Activated CD4-positive, alpha-beta memory T cell treated with anti-CD3 and anti-CD28 coated beads for 36 hours (primary cell): ENCODE measurements at regions of chr13 and their contacts with region 1.

Region 1: GRCh38 chr13:36736119-36736726 is 62.4 kb downstream of the SERTM1 start:
- DNase-seq: peak; percentile 28
- H3K4me3 Mint-ChIP-seq: no peak overlapping the region
- H3K27ac Mint-ChIP-seq: no peak overlapping the region
- H3K4me1 Mint-ChIP-seq: no peaks in the 10 kb centered on the region
- H3K27me3 Mint-ChIP-seq: no peaks in the 10 kb centered on the region

Region 2: GRCh38 chr13:35978603-35979316 is 757.5 kb before region 1 on chr13:
- CTCF ChIA-PET with region 1: interaction called, 7 read pairs
- POLR2A ChIA-PET with region 1: no interaction called
- intact Hi-C with region 1: loop called (anchors 2 kb)
- DNase-seq: no peak
- H3K4me3 Mint-ChIP-seq: no peak overlapping the region
- H3K27ac Mint-ChIP-seq: no peak overlapping the region
- H3K4me1 Mint-ChIP-seq: no peaks in the 10 kb centered on the region
- H3K27me3 Mint-ChIP-seq: peaks cover 2% of the 10 kb centered on the region

Region 3: DNA sequence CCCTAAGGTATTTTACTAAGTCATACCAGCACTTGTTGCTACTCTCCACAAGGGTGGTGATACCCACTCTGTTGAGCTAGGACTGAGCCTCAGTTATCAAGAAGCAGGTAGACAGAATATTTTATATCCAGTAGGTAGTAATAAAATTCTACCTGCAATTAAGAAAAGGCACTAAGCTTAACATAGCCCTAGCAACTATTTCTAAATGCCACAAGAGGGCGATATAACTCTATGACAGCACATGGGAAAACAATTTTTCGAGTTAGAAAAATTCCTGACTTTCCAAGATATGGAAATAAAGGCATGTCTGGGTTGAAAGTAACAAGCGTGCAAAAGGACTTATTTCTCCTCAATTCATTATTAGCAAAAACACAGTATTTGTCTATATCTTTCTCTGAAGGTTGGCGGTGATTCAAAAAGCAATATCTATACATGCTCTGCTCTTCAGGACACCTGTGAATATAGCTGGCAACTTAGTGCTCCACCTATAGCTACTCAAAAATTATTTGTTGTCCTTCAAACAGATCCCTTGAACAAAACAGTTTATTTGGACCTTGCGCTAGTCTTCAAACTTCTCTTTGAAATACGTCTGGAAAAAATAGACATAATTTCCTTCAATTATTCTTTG is 453.3 kb before region 1 on chr13:
- CTCF ChIA-PET with region 1: interaction called, 13 read pairs
- POLR2A ChIA-PET with region 1: no interaction called
- intact Hi-C with region 1: loop called (anchors 5 kb)
- DNase-seq: no peak
- H3K4me3 Mint-ChIP-seq: no peak overlapping the region
- H3K27ac Mint-ChIP-seq: no peak overlapping the region
- H3K4me1 Mint-ChIP-seq: no peaks in the 10 kb centered on the region
- H3K27me3 Mint-ChIP-seq: peaks cover 4% of the 10 kb centered on the region

Region 4: DNA sequence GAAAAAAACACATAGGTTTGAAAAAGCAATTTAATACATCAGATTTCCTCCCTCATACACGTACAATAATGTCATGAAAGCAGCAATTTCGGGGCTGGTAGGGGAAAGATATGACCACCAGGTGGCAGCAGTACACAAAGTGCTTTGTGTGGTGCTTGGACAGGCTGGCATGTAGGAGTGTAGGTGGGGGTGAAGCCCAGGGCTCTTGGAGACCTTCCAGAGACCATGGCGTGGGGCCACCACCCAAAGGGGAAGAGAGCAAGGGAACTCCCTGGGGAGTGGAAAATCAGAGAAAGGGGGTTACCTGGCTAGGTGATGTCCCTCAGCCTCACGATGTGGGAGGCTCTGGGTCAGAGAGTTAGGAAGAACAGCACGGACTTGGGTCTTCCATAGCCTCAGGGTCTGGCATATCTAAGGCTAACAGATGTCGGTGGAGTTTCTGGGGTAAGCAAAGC is 315.8 kb before region 1 on chr13:
- CTCF ChIA-PET with region 1: interaction called, 33 read pairs
- POLR2A ChIA-PET with region 1: interaction called, 3 read pairs
- intact Hi-C with region 1: loop called (anchors 1 kb)
- DNase-seq: peak; percentile 79
- H3K4me3 Mint-ChIP-seq: no peak overlapping the region
- H3K27ac Mint-ChIP-seq: peak overlapping the region; percentile 21
- H3K4me1 Mint-ChIP-seq: peaks cover 21% of the 10 kb centered on the region
- H3K27me3 Mint-ChIP-seq: peaks cover 43% of the 10 kb centered on the region

Region 5: DNA sequence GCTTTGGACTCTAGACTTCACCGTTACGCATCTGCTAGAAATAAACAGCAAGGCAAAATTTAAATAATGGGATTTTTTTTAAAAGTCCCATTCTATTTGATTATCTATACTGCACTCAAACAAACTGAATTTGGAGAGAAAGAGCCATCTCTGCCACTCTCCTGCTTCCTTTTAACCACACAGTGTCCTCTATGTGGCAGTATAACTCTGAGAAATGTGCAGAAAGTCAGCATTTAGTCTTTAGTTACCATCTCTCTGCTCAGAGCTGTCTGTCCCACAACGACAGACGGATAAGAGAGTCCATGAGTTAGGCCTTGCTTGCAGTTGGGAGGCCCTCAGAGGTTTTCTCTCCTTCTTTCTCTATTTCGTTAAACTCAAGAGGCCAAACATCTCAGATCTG is 282.7 kb before region 1 on chr13:
- CTCF ChIA-PET with region 1: interaction called, 7 read pairs
- POLR2A ChIA-PET with region 1: no interaction called
- intact Hi-C with region 1: loop called (anchors 1 kb)
- DNase-seq: no peak
- H3K4me3 Mint-ChIP-seq: no peak overlapping the region
- H3K27ac Mint-ChIP-seq: no peak overlapping the region
- H3K4me1 Mint-ChIP-seq: no peaks in the 10 kb centered on the region
- H3K27me3 Mint-ChIP-seq: peaks cover 3% of the 10 kb centered on the region

Region 6: GRCh38 chr13:36601186-36601585 is 135.0 kb before region 1 on chr13:
- CTCF ChIA-PET with region 1: no interaction called
- POLR2A ChIA-PET with region 1: no interaction called
- intact Hi-C with region 1: no loop called
- DNase-seq: no peak
- H3K4me3 Mint-ChIP-seq: no peak overlapping the region
- H3K27ac Mint-ChIP-seq: no peak overlapping the region
- H3K4me1 Mint-ChIP-seq: no peaks in the 10 kb centered on the region
- H3K27me3 Mint-ChIP-seq: no peaks in the 10 kb centered on the region

Region 7: DNA sequence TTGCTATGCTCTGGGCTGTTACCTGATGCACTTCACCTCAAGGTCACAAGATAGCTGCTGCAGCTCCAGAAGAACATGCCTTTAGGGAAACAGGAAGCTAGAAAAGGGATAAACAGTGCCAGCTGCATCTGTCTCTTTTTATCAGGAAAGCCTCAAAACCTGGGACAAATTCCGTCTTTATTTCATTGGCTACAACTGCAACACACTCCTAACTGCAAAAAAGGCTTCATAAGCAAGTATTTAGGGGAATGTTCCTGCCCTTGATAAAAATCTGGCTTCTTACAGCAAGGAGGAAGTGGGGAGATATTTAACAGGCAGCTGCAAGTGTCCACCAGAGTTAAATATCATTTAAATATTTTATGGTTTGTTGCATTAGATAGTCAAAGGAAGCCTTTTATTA is 96.6 kb before region 1 on chr13:
- CTCF ChIA-PET with region 1: no interaction called
- POLR2A ChIA-PET with region 1: no interaction called
- intact Hi-C with region 1: no loop called
- DNase-seq: no peak
- H3K4me3 Mint-ChIP-seq: no peak overlapping the region
- H3K27ac Mint-ChIP-seq: no peak overlapping the region
- H3K4me1 Mint-ChIP-seq: no peaks in the 10 kb centered on the region
- H3K27me3 Mint-ChIP-seq: no peaks in the 10 kb centered on the region

Region 8: GRCh38 chr13:36724141-36724540 is 12.1 kb before region 1 on chr13:
- CTCF ChIA-PET with region 1: interaction called, 11 read pairs
- POLR2A ChIA-PET with region 1: no interaction called
- intact Hi-C with region 1: no loop called
- DNase-seq: no peak
- H3K4me3 Mint-ChIP-seq: no peak overlapping the region
- H3K27ac Mint-ChIP-seq: no peak overlapping the region
- H3K4me1 Mint-ChIP-seq: no peaks in the 10 kb centered on the region
- H3K27me3 Mint-ChIP-seq: peaks cover 14% of the 10 kb centered on the region

Region 9: GRCh38 chr13:36891752-36892151 is 155.5 kb after region 1 on chr13:
- CTCF ChIA-PET with region 1: no interaction called
- POLR2A ChIA-PET with region 1: no interaction called
- intact Hi-C with region 1: no loop called
- DNase-seq: no peak
- H3K4me3 Mint-ChIP-seq: no peak overlapping the region
- H3K27ac Mint-ChIP-seq: no peak overlapping the region
- H3K4me1 Mint-ChIP-seq: no peaks in the 10 kb centered on the region
- H3K27me3 Mint-ChIP-seq: peaks cover 25% of the 10 kb centered on the region